GM12878 (cell line): ENCODE measurements at regions of chr2 and their contacts with region 1.

Region 1: DNA sequence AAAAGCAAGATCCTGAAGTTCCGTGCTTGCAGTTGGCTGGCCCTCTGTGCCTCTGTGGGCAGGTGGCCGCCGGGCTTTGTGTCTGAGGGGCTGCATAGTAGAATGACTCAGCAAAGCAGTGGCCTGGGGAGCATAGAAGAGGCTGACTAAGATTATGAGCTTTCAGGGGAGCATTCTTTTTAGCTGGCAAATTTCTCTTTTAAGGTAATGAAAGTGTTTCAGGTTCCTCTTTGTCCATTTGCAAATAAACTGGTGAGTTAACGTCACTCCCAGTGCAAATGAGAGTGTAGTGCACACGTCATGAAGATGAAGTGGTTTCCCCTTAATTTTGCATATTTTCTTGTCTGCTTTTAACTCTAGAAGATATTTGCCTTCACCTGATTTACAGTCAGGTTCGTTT is 98.6 kb downstream of the BCL2L11 start:
- DNase-seq: peak; percentile 98
- ATAC-seq: peak; percentile 96
- H3K4me3 ChIP-seq: peak overlapping the region; percentile 15; the same call in 1 of the 2 replicates
- H3K27ac ChIP-seq: peak overlapping the region; percentile 74
- H3K4me1 ChIP-seq: peaks cover 17% of the 10 kb centered on the region
- H3K27me3 ChIP-seq: no peaks in the 10 kb centered on the region
- CTCF ChIP-seq: no peak
- EP300 ChIP-seq: peak; percentile 99 to 100
- POLR2A ChIP-seq: no peak
- RAD21 ChIP-seq: 0 out of 2 replicates have a peak, but pooled peaks have one; percentile 0

Region 2: DNA sequence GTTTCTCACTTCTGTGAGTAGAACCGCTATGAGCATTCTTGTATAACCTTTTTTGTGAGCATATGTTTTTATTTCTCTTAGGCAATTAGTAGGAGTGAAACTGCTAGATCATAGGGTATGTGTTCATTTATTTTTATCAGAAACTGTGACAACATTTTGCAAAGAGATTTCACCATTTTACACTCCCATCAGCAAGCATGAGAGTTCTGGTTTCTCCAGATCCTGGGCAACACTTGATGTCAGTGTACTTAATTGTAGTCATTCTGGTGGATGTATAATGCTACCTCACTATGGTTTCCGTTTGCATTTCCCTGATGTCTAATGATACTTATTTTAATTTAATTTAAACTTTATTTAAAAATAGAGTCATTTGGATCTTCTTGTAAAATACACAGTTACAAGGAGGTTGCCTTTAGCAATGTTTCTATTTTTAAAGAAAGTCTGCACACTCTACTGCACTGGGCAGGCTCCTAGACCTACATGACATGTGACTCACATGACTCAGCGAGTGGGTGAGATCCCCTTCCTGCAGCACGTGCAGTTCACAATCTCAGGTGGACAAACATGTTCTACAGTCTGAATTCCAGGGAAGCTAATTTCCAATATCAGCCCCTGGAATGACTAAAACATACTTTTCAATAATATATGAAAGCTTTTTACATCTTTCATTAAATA is 225.6 kb before region 1 on chr2:
- CTCF ChIA-PET with region 1: no interaction called
- POLR2A ChIA-PET with region 1: no interaction called
- RAD21 ChIA-PET with region 1: no interaction called
- SMC1A ChIA-PET with region 1: no interaction called
- in situ Hi-C with region 1: no loop called
- intact Hi-C with region 1: no loop called
- DNase-seq: no peak
- ATAC-seq: no peak
- H3K4me3 ChIP-seq: no peak overlapping the region
- H3K27ac ChIP-seq: no peak overlapping the region
- H3K4me1 ChIP-seq: no peaks in the 10 kb centered on the region
- H3K27me3 ChIP-seq: peaks cover 0 to 2% of the 10 kb centered on the region in 2 experiments; a peak in 1 of 4 replicates
- CTCF ChIP-seq: no peak
- EP300 ChIP-seq: no peak
- POLR2A ChIP-seq: no peak
- RAD21 ChIP-seq: no peak

Region 3: GRCh38 chr2:111126581-111126980 is 92.7 kb before region 1 on chr2:
- CTCF ChIA-PET with region 1: no interaction called
- POLR2A ChIA-PET with region 1: no interaction called
- RAD21 ChIA-PET with region 1: interaction called, 5 read pairs
- SMC1A ChIA-PET with region 1: interaction called, 12 read pairs
- in situ Hi-C with region 1: no loop called
- intact Hi-C with region 1: no loop called
- DNase-seq: no peak
- ATAC-seq: no peak
- H3K4me3 ChIP-seq: no peak overlapping the region
- H3K27ac ChIP-seq: no peak overlapping the region
- H3K4me1 ChIP-seq: no peaks in the 10 kb centered on the region; the same call in 1 of the 2 replicates
- H3K27me3 ChIP-seq: no peaks in the 10 kb centered on the region
- CTCF ChIP-seq: no peak
- EP300 ChIP-seq: no peak
- POLR2A ChIP-seq: no peak
- RAD21 ChIP-seq: no peak

Region 4: GRCh38 chr2:111157798-111158197 is 61.5 kb before region 1 on chr2:
- CTCF ChIA-PET with region 1: no interaction called
- POLR2A ChIA-PET with region 1: no interaction called
- RAD21 ChIA-PET with region 1: no interaction called
- SMC1A ChIA-PET with region 1: interaction called, 10 read pairs
- in situ Hi-C with region 1: no loop called
- intact Hi-C with region 1: no loop called
- DNase-seq: peak; percentile 69
- ATAC-seq: peak; percentile 82
- H3K4me3 ChIP-seq: no peak overlapping the region
- H3K27ac ChIP-seq: no peak overlapping the region
- H3K4me1 ChIP-seq: peaks cover 19% of the 10 kb centered on the region
- H3K27me3 ChIP-seq: no peaks in the 10 kb centered on the region
- CTCF ChIP-seq: peak; percentile 19 to 27 (median 22); a peak in 3 of 6 replicates
- EP300 ChIP-seq: no peak
- POLR2A ChIP-seq: no peak
- RAD21 ChIP-seq: no peak

Region 5: GRCh38 chr2:111194835-111195621 is 24.3 kb before region 1 on chr2:
- CTCF ChIA-PET with region 1: interaction called, 6 read pairs
- POLR2A ChIA-PET with region 1: interaction called, 11 read pairs
- RAD21 ChIA-PET with region 1: interaction called, 43 read pairs
- SMC1A ChIA-PET with region 1: interaction called, 108 read pairs
- in situ Hi-C with region 1: no loop called
- intact Hi-C with region 1: no loop called
- DNase-seq: peak; percentile 98
- ATAC-seq: peak; percentile 88
- H3K4me3 ChIP-seq: no peak overlapping the region
- H3K27ac ChIP-seq: peak overlapping the region; percentile 41; the same call in 1 of the 2 replicates
- H3K4me1 ChIP-seq: peaks cover 36% of the 10 kb centered on the region
- H3K27me3 ChIP-seq: no peaks in the 10 kb centered on the region
- CTCF ChIP-seq: peak; percentile 42 to 46 (median 45); a peak in 5 of 6 replicates
- EP300 ChIP-seq: peak; percentile 76 to 96
- POLR2A ChIP-seq: no peak
- RAD21 ChIP-seq: peak; percentile 47

Region 6: GRCh38 chr2:111201214-111201613 is 18.1 kb before region 1 on chr2:
- CTCF ChIA-PET with region 1: interaction called, 5 read pairs
- POLR2A ChIA-PET with region 1: interaction called, 4 read pairs
- RAD21 ChIA-PET with region 1: interaction called, 27 read pairs
- SMC1A ChIA-PET with region 1: interaction called, 108 read pairs
- in situ Hi-C with region 1: no loop called
- intact Hi-C with region 1: loop called (anchors 1 kb)
- DNase-seq: peak; percentile 87
- ATAC-seq: peak; percentile 90
- H3K4me3 ChIP-seq: no peak overlapping the region
- H3K27ac ChIP-seq: peak overlapping the region; percentile 26; the same call in 1 of the 2 replicates
- H3K4me1 ChIP-seq: peaks cover 46% of the 10 kb centered on the region
- H3K27me3 ChIP-seq: no peaks in the 10 kb centered on the region
- CTCF ChIP-seq: no peak
- EP300 ChIP-seq: peak; percentile 84 to 90; a peak in 3 of 4 replicates
- POLR2A ChIP-seq: no peak
- RAD21 ChIP-seq: no peak

Region 7: GRCh38 chr2:111239107-111239506 is 19.8 kb after region 1 on chr2:
- CTCF ChIA-PET with region 1: interaction called, 12 read pairs
- POLR2A ChIA-PET with region 1: interaction called, 3 read pairs
- RAD21 ChIA-PET with region 1: interaction called, 14 read pairs
- SMC1A ChIA-PET with region 1: interaction called, 10 read pairs
- in situ Hi-C with region 1: no loop called
- intact Hi-C with region 1: no loop called
- DNase-seq: no peak
- ATAC-seq: peak; percentile 100
- H3K4me3 ChIP-seq: no peak overlapping the region
- H3K27ac ChIP-seq: no peak overlapping the region
- H3K4me1 ChIP-seq: peaks cover 9% of the 10 kb centered on the region
- H3K27me3 ChIP-seq: no peaks in the 10 kb centered on the region
- CTCF ChIP-seq: no peak
- EP300 ChIP-seq: peak in 1 of 2 experiments; percentile 57; a peak in 1 of 4 replicates
- POLR2A ChIP-seq: no peak
- RAD21 ChIP-seq: no peak